CD4-positive, alpha-beta memory T cell (primary cell): ENCODE measurements at regions of chr11 and their contacts with region 1.

Region 1: DNA sequence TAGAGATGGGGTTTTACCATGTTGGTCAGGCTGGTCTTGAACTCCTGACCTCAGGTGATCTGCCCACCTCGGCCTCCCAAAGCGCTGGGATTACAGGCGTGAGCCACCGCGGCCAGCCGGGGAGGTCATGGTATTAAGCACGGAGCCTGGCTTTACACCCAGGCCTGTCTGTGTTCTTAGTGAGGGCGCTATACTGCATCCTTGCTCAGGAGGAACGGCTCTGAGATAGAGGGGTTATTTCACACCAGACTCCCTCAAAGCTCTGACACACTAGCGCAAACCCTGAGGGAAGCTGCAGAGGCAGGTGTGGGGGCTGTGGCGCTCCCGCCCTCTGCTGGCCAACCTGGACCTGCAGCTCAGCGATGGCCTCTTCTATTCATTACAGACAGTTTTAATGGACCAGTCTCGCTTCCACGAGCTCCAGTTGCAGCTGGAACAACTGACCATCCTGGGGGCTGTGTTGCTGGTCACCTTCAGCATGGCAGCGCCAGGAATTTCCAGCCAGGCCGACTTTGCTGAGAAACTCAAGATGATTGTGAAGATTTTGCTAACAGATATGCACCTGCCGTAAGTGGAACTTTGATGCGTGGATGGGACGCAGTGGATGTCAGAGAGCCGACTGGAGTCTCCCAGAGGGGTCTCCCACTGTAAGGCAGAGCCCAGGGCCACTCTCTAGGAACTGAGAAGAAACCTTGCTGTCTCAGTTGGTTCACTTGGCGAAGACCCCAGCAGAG is 26.2 kb downstream of the TCP11L1 start:
- DNase-seq: peak; percentile 66 to 72 (median 67)
- H3K4me3 ChIP-seq: no peak overlapping the region
- H3K4me3 Mint-ChIP-seq: no peak overlapping the region
- H3K27ac ChIP-seq: no peak overlapping the region
- H3K27ac Mint-ChIP-seq: peak overlapping the region in 1 of 7 donors; percentile 64
- H3K4me1 ChIP-seq: peaks cover 5% of the 10 kb centered on the region
- H3K4me1 Mint-ChIP-seq: peaks cover 15 to 30% (median 25%) of the 10 kb centered on the region in 4 donors
- H3K27me3 ChIP-seq: no peaks in the 10 kb centered on the region
- H3K27me3 Mint-ChIP-seq: no peaks in the 10 kb centered on the region

Region 2: DNA sequence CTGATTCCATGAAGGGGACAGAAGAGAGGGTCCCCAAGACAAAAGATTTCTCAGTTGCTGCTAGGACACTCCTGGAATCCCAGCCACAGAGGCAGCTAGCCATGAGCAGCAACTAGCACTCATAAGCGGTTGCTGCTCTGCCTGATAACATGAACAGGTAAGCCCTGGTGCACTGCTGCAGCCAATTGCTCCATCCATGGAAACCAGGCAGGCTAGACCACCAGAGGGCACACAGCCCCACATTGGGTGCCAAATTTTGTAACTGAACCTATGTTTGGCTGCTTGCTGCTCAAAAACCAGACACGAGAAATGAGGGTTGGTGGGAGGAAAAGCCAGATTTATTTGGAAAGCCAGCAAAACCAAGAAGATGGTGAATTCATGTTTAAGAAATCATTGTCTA is 194.9 kb before region 1 on chr11:
- CTCF ChIA-PET with region 1: interaction called, 4 read pairs
- POLR2A ChIA-PET with region 1: no interaction called
- intact Hi-C with region 1: loop called (anchors 5 kb)
- DNase-seq: peak in 3 of 5 donors; percentile 4 to 15 (median 4)
- H3K4me3 ChIP-seq: no peak overlapping the region
- H3K4me3 Mint-ChIP-seq: no peak overlapping the region
- H3K27ac ChIP-seq: no peak overlapping the region
- H3K27ac Mint-ChIP-seq: peak overlapping the region in 1 of 7 donors; percentile 44
- H3K4me1 ChIP-seq: no peaks in the 10 kb centered on the region
- H3K4me1 Mint-ChIP-seq: no peaks in the 10 kb centered on the region
- H3K27me3 ChIP-seq: no peaks in the 10 kb centered on the region
- H3K27me3 Mint-ChIP-seq: peaks cover 5 to 14% of the 10 kb centered on the region in 2 donors

Region 3: GRCh38 chr11:33015621-33016551 is 49.7 kb before region 1 on chr11 and contains the start of gene DEPDC7:
- CTCF ChIA-PET with region 1: interaction called, 10 read pairs
- POLR2A ChIA-PET with region 1: interaction called, 3 read pairs
- intact Hi-C with region 1: loop called (anchors 2 kb)
- DNase-seq: peak; percentile 66 to 73 (median 69)
- H3K4me3 ChIP-seq: peak within 1 kb of the TSS; percentile 43 to 49
- H3K4me3 Mint-ChIP-seq: peak within 1 kb of the TSS; percentile 82 to 88 (median 86)
- H3K27ac ChIP-seq: no peak within 1 kb of the TSS
- H3K27ac Mint-ChIP-seq: peak within 1 kb of the TSS in 3 of 7 donors; percentile 8 to 66 (median 25)
- H3K4me1 ChIP-seq: peaks cover 25% of the 10 kb centered on the region
- H3K4me1 Mint-ChIP-seq: peaks cover 14 to 42% (median 25%) of the 10 kb centered on the region in 4 donors
- H3K27me3 ChIP-seq: peaks cover 3% of the 10 kb centered on the region
- H3K27me3 Mint-ChIP-seq: peaks cover 9 to 19% of the 10 kb centered on the region in 2 donors
- total RNA-seq, gene DEPDC7: 1.4 to 1.9 TPM

Region 4: GRCh38 chr11:33039274-33040032 is 26.2 kb before region 1 on chr11 and contains the start of gene TCP11L1:
- CTCF ChIA-PET with region 1: interaction called, 16 read pairs
- POLR2A ChIA-PET with region 1: interaction called, 3 read pairs
- intact Hi-C with region 1: loop called (anchors 2 kb)
- DNase-seq: peak; percentile 74 to 90 (median 80)
- H3K4me3 ChIP-seq: peak within 1 kb of the TSS; percentile 62 to 73
- H3K4me3 Mint-ChIP-seq: peak within 1 kb of the TSS; percentile 93 to 95 (median 95)
- H3K27ac ChIP-seq: peak within 1 kb of the TSS; percentile 78
- H3K27ac Mint-ChIP-seq: peak within 1 kb of the TSS; percentile 92 to 98 (median 95)
- H3K4me1 ChIP-seq: peaks cover 11% of the 10 kb centered on the region
- H3K4me1 Mint-ChIP-seq: peaks cover 8 to 19% (median 11%) of the 10 kb centered on the region in 4 donors
- H3K27me3 ChIP-seq: no peaks in the 10 kb centered on the region
- H3K27me3 Mint-ChIP-seq: peaks cover 2 to 7% of the 10 kb centered on the region in 2 donors
- total RNA-seq, gene TCP11L1: 20.2 to 20.9 TPM

Region 5: DNA sequence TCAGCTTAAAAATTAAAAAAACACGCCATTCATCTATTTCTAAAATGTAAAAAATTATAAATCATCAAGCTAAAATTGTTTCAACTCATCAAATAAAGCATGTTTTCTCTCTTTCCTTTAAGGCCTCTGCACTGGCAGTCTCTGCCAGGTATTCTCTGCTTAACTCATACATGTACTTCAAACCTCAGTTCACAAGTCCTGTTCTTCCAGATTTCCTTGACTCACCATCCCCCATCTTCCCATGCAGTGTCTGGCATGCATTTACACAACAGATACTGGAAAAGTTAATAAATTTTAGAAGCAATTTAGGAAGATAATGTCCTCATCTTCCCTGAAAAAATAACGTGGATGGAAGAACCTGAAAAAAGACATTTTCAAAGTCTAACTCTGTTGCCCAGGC is 63.1 kb after region 1 on chr11:
- CTCF ChIA-PET with region 1: no interaction called
- POLR2A ChIA-PET with region 1: no interaction called
- intact Hi-C with region 1: no loop called
- DNase-seq: no peak
- H3K4me3 ChIP-seq: no peak overlapping the region
- H3K4me3 Mint-ChIP-seq: no peak overlapping the region
- H3K27ac ChIP-seq: no peak overlapping the region
- H3K27ac Mint-ChIP-seq: peak overlapping the region in 2 of 7 donors; percentile 32 to 64
- H3K4me1 ChIP-seq: peaks cover 13% of the 10 kb centered on the region
- H3K4me1 Mint-ChIP-seq: peaks cover 0 to 9% (median 4%) of the 10 kb centered on the region in 4 donors
- H3K27me3 ChIP-seq: no peaks in the 10 kb centered on the region
- H3K27me3 Mint-ChIP-seq: no peaks in the 10 kb centered on the region

Region 6: GRCh38 chr11:33234397-33235190 is 169.0 kb after region 1 on chr11:
- CTCF ChIA-PET with region 1: no interaction called
- POLR2A ChIA-PET with region 1: no interaction called
- intact Hi-C with region 1: no loop called
- DNase-seq: no peak
- H3K4me3 ChIP-seq: no peak overlapping the region
- H3K4me3 Mint-ChIP-seq: no peak overlapping the region
- H3K27ac ChIP-seq: no peak overlapping the region
- H3K27ac Mint-ChIP-seq: no peak overlapping the region
- H3K4me1 ChIP-seq: no peaks in the 10 kb centered on the region
- H3K4me1 Mint-ChIP-seq: no peaks in the 10 kb centered on the region
- H3K27me3 ChIP-seq: no peaks in the 10 kb centered on the region
- H3K27me3 Mint-ChIP-seq: no peaks in the 10 kb centered on the region